ENCODE measurements at regions of chr15 and their contacts with region 1.

Region 1: GRCh38 chr15:55044162-55044561 is 152.6 kb downstream of the RSL24D1 start:
- DNase-seq: no peak

Region 2: GRCh38 chr15:53307952-53308621 is 1736.1 kb before region 1 on chr15:
- intact Hi-C with region 1: no loop called
- DNase-seq: no peak

Region 3: GRCh38 chr15:55016226-55016625 is 27.9 kb before region 1 on chr15:
- intact Hi-C with region 1: no loop called
- DNase-seq: no peak

Region 4: DNA sequence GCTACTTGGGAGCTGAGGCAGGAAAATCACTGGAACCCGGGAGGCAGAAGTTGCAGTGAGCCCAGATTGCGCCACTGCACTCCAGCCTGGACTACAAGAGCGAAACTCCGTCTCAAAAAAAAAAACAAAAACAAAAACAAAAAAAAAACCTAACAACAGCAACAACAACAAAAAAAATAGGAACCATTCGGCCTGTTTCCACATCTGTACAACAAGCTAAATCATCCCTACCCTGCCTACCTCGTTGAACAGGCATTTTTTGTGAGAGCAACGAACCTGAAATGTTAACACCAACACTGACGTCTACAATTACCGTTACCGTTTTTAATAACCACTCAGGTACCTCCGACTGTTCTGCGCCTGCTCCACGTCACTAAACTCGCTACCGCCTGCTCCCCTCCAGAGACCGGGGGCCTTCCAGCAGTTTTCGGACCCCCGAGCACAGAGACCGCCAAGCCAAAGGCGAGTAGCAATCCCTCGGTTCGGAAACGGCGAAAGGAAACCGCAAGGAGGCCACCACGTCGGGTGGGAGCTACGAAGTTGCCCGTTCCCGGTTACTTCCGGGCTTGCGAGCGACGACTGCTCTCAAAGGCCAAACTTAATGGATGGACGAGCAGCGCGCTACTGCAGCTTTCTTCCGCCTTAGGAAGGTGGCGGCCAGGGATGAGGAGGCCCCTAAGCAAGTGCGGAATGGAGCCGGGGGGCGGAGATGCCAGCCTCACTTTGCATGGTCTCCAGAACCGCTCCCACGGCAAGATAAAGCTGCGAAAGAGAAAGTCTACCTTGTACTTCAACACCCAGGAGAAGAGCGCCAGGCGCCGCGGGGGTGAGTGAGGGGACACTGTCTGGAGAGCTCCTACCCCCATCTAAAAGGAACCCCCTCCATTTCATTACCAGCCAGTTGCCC is 274.7 kb after region 1 on chr15 and contains the starts of genes PIGB and PIGBOS1:
- intact Hi-C with region 1: no loop called
- DNase-seq: peak; percentile 96
- total RNA-seq, gene PIGB: 13.6 to 16.1 TPM
- total RNA-seq, gene PIGBOS1: 8.5 to 8.7 TPM

Region 5: DNA sequence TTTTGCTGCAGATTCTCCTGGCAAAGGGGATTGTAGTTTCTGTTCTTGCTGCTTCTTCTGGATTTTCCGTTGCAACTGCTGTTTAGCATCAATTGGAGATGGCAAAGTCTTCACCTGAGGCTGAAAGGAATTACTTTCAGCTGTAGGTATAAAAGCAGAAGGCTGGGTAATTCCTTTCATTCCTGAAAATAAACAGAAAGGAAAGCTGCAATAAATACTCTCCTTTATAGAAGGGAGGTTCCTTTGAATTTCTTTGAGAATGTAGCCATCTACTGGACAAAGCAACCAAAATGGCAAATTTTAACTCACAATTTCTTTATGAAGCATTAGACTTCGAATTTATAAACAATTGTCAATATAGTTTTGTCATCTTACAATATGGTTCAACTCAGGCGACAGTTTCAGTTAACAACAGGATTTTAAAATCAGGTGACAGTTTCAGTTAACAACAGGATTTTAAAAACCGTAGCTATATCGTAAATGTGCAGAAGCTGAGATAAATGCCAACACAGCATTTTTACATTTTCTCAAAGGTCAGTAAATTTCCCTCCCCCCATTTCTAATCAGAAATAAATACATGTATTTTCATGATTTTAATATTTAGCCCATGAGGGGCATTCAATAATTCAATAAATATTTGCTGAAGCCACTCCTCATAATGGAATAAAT is 1054.2 kb after region 1 on chr15:
- intact Hi-C with region 1: loop called in 1 of 2 experiments (anchors 5 kb)
- DNase-seq: no peak

Measured in posterior vena cava (tissue), 2 donors.